ENCODE measurements at regions of chr1 and their contacts with region 1.

Region 1: GRCh38 chr1:179809506-179810366 is 66.6 kb downstream of the FAM163A start:
- DNase-seq: peak; percentile 79
- ATAC-seq: peak; percentile 65
- H3K4me3 Mint-ChIP-seq: no peak overlapping the region
- H3K27ac Mint-ChIP-seq: no peak overlapping the region
- H3K4me1 Mint-ChIP-seq: peaks cover 6% of the 10 kb centered on the region
- H3K27me3 Mint-ChIP-seq: peaks cover 4% of the 10 kb centered on the region

Region 2: GRCh38 chr1:179441501-179441900 is 368.2 kb before region 1 on chr1:
- CTCF ChIA-PET with region 1: no interaction called
- POLR2A ChIA-PET with region 1: no interaction called
- DNase-seq: no peak
- ATAC-seq: no peak
- H3K4me3 Mint-ChIP-seq: no peak overlapping the region
- H3K27ac Mint-ChIP-seq: no peak overlapping the region
- H3K4me1 Mint-ChIP-seq: no peaks in the 10 kb centered on the region
- H3K27me3 Mint-ChIP-seq: no peaks in the 10 kb centered on the region

Region 3: GRCh38 chr1:179575497-179576314 is 234.0 kb before region 1 on chr1 and contains the start of gene NPHS2:
- CTCF ChIA-PET with region 1: no interaction called
- POLR2A ChIA-PET with region 1: no interaction called
- DNase-seq: no peak
- ATAC-seq: no peak
- H3K4me3 Mint-ChIP-seq: no peak within 1 kb of the TSS
- H3K27ac Mint-ChIP-seq: no peak within 1 kb of the TSS
- H3K4me1 Mint-ChIP-seq: peaks cover 2% of the 10 kb centered on the region
- H3K27me3 Mint-ChIP-seq: peaks cover 36% of the 10 kb centered on the region
- total RNA-seq, gene NPHS2: not detected

Region 4: DNA sequence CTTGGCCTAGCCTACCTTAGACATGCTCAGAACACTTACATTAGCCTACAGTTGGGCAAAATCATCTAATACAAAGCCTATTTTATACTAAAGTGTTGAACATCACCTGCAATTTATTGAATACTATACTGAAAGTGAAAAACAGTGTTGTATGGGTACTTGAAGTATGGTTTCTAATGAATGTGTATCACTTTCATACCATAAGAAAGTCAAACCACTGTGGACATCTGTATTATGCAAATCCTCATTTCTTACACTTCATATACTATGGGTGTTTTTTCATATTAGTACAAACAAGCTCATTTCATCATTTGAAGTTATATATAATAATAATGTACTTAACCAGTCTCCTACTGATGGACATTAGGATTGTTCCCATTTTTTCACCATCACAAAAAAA is 176.9 kb before region 1 on chr1:
- CTCF ChIA-PET with region 1: no interaction called
- POLR2A ChIA-PET with region 1: no interaction called
- DNase-seq: no peak
- ATAC-seq: no peak
- H3K4me3 Mint-ChIP-seq: no peak overlapping the region
- H3K27ac Mint-ChIP-seq: no peak overlapping the region
- H3K4me1 Mint-ChIP-seq: no peaks in the 10 kb centered on the region
- H3K27me3 Mint-ChIP-seq: no peaks in the 10 kb centered on the region

Region 5: GRCh38 chr1:179728271-179728670 is 81.5 kb before region 1 on chr1:
- CTCF ChIA-PET with region 1: interaction called, 31 read pairs
- POLR2A ChIA-PET with region 1: no interaction called
- DNase-seq: no peak
- ATAC-seq: no peak
- H3K4me3 Mint-ChIP-seq: no peak overlapping the region
- H3K27ac Mint-ChIP-seq: no peak overlapping the region
- H3K4me1 Mint-ChIP-seq: no peaks in the 10 kb centered on the region
- H3K27me3 Mint-ChIP-seq: peaks cover 11% of the 10 kb centered on the region

Region 6: DNA sequence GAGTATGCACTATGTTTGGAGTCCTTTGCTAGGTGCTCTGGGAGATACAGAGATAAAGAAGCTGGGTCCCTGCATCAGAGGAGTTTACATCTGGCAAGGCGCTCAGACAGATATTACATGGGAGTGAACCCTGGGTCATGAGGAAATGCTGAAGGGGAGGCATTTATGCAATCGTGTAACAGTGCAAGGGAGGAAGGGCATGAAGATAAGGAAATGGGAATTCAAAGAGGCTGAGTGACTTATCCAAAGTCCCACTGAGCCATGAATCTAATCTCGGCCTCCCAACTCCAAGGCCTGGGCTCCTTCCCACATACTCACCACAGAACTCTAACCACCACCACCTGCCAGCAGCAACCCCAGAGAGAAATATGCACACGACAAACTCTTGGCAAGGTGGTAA is 15.1 kb before region 1 on chr1:
- CTCF ChIA-PET with region 1: interaction called, 15 read pairs
- POLR2A ChIA-PET with region 1: no interaction called
- DNase-seq: no peak
- ATAC-seq: no peak
- H3K4me3 Mint-ChIP-seq: no peak overlapping the region
- H3K27ac Mint-ChIP-seq: no peak overlapping the region
- H3K4me1 Mint-ChIP-seq: no peaks in the 10 kb centered on the region
- H3K27me3 Mint-ChIP-seq: peaks cover 5% of the 10 kb centered on the region

Region 7: GRCh38 chr1:179840107-179840506 is 30.4 kb after region 1 on chr1:
- CTCF ChIA-PET with region 1: interaction called, 14 read pairs
- POLR2A ChIA-PET with region 1: no interaction called
- DNase-seq: no peak
- ATAC-seq: no peak
- H3K4me3 Mint-ChIP-seq: no peak overlapping the region
- H3K27ac Mint-ChIP-seq: no peak overlapping the region
- H3K4me1 Mint-ChIP-seq: no peaks in the 10 kb centered on the region
- H3K27me3 Mint-ChIP-seq: no peaks in the 10 kb centered on the region

Region 8: DNA sequence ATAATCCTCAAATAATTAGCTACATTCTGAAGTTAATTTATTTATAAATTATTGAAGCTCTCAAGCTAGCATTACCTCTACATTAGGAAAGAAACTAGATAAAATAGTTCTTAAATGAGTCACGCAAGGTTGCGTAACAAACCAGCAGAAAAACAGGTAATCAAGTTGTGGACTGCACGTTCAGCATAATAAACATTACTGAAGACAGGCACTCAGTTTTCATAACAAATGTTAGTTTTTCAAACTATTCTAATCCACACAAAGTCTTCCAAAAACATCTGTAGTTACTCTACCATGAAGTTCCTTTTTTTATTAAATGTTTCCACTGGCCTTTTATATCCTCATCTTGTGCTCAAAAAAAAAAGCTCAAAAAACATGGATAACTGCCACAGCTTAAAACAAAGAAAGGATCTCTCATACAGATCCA is 66.6 kb after region 1 on chr1:
- CTCF ChIA-PET with region 1: interaction called, 14 read pairs
- POLR2A ChIA-PET with region 1: interaction called, 4 read pairs
- DNase-seq: no peak
- ATAC-seq: no peak
- H3K4me3 Mint-ChIP-seq: peak overlapping the region; percentile 86
- H3K27ac Mint-ChIP-seq: peak overlapping the region; percentile 52
- H3K4me1 Mint-ChIP-seq: peaks cover 47% of the 10 kb centered on the region
- H3K27me3 Mint-ChIP-seq: no peaks in the 10 kb centered on the region

Region 9: DNA sequence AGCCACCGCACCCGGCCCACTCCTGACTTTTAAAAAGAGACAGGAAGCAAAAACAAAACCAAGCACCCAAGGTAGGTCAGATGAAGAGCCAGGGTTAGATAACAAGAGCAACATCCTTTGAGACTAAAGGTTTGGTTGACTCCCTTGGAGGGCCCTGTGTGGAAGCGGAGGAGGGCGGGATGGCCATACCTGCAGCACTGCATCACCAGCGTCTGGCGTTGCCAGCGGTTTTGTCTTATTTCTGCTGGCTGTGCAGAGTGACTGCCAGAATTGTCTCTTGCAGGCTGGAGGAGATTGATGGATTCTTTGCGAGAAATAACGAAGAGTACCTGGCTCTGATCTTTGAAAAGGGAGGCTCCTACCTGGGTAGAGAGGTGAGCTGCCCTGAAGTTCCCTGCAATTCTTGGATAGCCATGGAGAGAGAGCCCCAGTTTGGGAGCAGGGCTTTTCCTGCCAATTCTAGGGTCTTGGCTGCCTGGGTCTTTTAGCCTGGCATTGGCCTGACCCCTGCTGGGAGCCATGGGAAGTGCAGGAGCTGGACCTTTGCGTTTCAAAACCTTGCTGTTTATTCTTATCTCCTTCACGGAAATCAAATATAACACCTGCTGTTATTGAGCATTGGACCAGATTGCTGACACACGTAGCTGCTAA is 368.9 kb after region 1 on chr1:
- CTCF ChIA-PET with region 1: interaction called, 31 read pairs
- POLR2A ChIA-PET with region 1: no interaction called
- DNase-seq: peak; percentile 71
- ATAC-seq: peak; percentile 54
- H3K4me3 Mint-ChIP-seq: no peak overlapping the region
- H3K27ac Mint-ChIP-seq: no peak overlapping the region
- H3K4me1 Mint-ChIP-seq: no peaks in the 10 kb centered on the region
- H3K27me3 Mint-ChIP-seq: no peaks in the 10 kb centered on the region